AG04449 (cell line): ENCODE measurements at regions of chr17 and their contacts with region 1.

Region 1: DNA sequence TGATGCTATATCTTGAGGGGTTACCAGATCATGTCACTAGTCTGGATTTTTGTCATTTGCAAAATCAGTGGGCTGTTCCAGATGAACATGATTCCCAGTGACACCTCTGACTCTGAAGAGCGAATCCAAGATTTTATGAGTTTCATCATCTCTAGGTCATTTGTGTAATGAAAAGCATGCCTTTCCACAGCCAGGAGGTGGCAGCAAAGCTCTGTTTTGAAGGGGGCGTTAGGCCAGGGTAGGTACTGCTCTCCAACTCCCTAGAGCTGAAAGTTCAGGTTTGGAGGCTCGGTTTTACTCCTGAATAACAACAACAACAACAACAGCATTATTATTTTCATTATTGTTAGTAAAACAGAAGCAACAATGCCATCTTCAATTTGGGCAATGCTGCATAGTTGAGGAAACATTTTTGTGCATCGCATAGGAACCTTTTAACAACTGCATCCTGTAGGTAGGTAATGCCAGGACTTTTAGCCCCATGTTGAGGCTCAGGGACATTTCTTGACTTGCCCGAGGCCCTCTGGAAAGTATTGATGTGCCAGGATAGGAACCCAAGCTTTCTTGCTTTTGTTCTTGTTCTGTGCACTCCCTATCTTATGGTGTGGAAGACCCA is 77.0 kb downstream of the MYH13 start:
- DNase-seq: no peak
- H3K4me3 ChIP-seq: no peak overlapping the region
- CTCF ChIP-seq: peak; percentile 74

Region 2: GRCh38 chr17:10156948-10157607 is 138.8 kb before region 1 on chr17:
- CTCF ChIA-PET with region 1: no interaction called
- POLR2A ChIA-PET with region 1: no interaction called
- DNase-seq: no peak
- H3K4me3 ChIP-seq: no peak overlapping the region
- CTCF ChIP-seq: no peak

Region 3: DNA sequence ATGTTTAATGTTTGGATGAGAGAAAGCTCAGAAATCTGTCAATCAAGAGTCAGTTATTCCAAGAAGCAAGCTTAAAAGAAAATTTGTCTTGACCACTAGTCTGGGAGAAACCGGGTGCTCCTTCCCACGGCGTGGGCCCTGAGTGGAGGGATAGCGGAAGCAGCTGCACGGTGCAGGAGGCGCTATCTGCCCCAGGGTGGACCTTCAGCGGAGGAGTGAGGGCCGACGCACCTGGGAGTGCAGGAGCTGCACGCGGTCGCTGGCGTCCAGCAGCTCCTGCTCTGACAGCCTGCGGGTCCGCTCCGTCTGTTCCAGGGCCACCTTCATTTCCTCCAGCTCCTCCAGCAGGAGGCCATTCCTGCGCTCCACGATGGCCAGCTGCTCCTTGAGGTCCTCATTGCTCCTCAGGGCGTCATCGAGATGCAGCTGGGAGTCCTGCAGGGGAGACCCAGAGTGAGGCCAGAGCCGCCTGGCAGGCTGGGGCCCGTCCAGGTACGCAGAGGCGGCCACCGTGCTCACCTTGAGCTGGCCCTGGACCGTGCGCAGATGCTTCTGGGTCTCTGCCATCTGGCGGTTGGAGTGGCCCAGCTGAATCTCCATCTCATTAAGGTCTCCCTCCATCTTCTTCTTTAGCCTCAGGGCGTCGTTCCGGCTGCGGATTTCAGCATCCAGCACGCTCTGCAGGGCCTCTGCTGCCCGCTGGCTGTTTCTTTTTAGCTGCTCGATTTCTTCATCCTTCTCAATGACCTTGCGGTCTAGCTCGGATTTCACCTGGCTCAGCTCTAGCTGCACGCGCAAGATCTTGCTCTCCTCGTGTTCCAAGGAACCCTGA is 13.4 kb after region 1 on chr17:
- CTCF ChIA-PET with region 1: interaction called, 18 read pairs
- POLR2A ChIA-PET with region 1: no interaction called
- DNase-seq: no peak
- H3K4me3 ChIP-seq: no peak overlapping the region
- CTCF ChIP-seq: no peak

Region 4: DNA sequence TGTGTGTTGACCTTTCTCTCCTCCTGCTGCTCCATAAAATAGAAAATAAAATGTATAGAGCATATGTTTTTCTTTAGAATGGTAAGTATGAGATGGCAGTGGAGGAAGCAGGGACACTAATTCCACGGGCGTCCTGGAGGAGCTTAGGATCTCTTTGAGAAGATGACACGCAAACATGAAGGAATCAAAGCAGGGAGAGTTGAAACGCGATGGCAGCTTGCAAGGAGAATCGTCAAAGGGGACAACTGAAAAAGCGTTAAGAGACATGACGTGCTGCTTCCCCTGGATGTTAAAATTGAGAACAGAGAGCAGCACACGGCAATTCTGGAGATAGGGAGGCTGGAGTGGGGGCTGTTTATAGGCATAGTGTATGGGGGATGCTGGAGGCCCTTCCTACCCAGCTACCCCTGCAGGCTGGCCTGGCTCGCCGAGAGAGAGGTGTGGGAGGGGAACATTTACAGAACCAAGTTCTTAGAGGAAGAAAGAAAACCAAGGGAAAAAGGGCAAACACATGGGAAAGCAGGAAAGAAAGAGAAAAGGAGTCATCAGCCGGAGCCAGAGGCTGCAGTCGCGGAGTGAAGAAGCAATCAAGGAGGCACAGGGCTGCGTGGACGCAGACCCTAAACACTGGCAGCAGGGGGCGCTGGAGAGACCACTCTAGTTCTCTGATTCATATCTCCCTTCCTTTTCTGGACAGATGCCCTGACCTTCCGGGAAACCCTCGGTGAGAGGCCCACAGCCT is 21.1 kb after region 1 on chr17:
- CTCF ChIA-PET with region 1: interaction called, 18 read pairs
- POLR2A ChIA-PET with region 1: no interaction called
- DNase-seq: no peak
- H3K4me3 ChIP-seq: no peak overlapping the region
- CTCF ChIP-seq: peak; percentile 69

Region 5: DNA sequence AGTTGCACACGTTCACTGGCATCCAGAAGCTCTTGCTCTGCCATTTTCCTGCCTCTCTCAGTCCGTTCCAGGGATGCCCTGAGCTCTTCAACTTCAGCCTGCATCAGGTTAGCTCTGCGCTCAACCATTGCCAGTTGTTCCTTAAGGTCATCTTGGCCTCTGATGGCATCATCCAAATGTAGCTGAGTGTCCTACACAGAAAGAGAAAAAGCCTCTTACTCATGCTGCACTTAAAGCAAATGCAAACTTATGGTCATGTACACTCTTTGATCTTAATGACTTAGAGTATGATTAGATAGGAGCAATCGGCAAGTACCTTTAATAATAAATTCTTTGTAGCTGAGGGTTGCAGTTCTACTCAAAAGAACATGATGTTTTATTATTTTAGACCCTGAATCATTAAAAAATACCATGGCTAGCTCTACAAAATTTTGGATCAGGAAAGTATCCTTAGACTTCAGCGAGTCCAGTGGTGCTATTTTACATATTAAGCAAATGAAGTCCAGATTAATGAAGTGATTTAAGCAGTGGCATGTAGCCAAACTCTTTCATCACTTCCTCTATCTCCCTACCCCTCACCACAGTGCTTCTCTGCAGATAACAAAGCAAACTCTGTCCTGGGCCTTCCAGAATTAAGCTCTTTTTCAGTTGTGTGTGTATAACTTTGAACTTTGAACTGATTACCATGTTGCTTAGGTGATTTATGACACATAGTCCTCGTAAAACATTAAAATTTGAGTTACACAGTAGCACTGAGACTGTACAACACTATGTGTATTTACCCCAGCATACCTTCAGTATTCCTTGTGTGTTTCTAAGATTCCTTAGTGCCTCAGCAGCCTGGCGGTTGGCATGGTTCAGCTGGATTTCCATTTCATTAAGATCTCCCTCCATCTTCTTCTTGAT is 151.4 kb after region 1 on chr17:
- CTCF ChIA-PET with region 1: no interaction called
- POLR2A ChIA-PET with region 1: no interaction called
- DNase-seq: no peak
- H3K4me3 ChIP-seq: no peak overlapping the region
- CTCF ChIP-seq: no peak